GM12878 (cell line): ENCODE measurements at regions of chr17 and their contacts with region 1.

Region 1: DNA sequence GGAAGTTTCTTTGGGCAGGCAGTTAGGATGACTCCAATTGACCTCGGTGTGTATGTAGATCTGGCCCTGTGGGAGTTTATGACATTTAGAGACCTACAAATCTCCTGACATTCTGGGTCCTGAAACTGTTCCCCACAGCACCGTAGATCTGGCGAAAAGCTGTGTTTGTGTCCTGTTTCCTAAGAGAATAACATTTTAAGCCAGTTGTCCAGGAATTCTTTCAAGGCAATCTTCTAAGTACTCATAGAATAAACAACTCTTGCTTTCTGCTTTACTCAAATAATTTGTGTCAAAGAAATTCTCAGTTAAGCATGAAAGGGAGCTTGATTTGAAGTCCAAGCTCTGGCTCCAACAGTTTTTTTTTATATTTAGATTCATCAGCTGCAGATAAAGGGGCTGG is 78.5 kb upstream of the ELAC2 start:
- DNase-seq: no peak
- ATAC-seq: no peak
- H3K4me3 ChIP-seq: no peak overlapping the region
- H3K27ac ChIP-seq: no peak overlapping the region
- H3K4me1 ChIP-seq: no peaks in the 10 kb centered on the region
- H3K27me3 ChIP-seq: no peaks in the 10 kb centered on the region
- CTCF ChIP-seq: no peak
- EP300 ChIP-seq: no peak
- POLR2A ChIP-seq: no peak
- RAD21 ChIP-seq: no peak

Region 2: DNA sequence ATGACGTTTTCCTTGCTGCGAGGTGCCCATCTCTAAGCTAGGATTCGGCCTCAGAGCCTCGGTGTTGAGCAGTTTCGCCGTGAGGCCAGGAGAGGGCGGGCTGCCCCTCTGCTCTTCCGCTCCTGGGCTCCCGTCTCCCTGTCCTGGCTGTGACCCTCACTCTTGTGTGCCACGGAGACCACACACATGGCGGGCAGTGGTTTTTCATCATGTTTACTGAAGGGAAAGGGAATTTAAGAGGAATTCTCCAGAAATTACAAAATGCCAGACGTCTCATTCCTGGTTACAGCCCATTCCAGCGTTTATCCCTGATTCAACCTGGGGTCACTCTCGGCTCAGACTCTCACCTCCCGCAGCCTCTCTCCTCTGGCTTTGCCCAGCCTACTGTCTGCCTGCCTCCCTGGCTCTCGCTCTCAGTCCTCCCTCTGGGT is 18.3 kb after region 1 on chr17:
- CTCF ChIA-PET with region 1: interaction called, 20 read pairs
- POLR2A ChIA-PET with region 1: no interaction called
- RAD21 ChIA-PET with region 1: no interaction called
- SMC1A ChIA-PET with region 1: interaction called, 3 read pairs
- in situ Hi-C with region 1: no loop called
- intact Hi-C with region 1: no loop called
- DNase-seq: no peak
- ATAC-seq: peak; percentile 63
- H3K4me3 ChIP-seq: no peak overlapping the region
- H3K27ac ChIP-seq: no peak overlapping the region
- H3K4me1 ChIP-seq: no peaks in the 10 kb centered on the region
- H3K27me3 ChIP-seq: no peaks in the 10 kb centered on the region
- CTCF ChIP-seq: peak; percentile 37 to 61 (median 38); a peak in 4 of 6 replicates
- EP300 ChIP-seq: no peak
- POLR2A ChIP-seq: no peak
- RAD21 ChIP-seq: no peak; the same call in 1 of the 2 replicates